ENCODE measurements at regions of chr18 and their contacts with region 1.

Region 1: DNA sequence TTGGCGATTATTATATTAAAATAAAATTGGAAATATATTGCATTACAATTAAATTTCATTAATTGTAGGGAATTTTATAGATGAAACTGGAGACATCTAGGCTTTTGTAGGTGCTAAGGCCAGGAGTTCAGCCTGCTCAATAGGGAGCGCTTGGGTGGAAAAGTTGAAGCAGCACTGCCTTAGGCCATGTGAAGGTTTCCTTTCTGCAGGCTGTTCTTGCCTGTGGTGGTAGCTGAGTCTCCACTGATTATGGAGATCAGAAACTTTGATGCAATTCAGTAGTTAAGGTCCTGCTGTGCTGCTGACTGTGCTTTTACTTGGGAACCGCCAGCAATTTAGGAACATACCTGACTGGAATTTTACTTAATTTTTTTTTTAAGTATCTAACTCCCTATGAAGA is 179.9 kb upstream of the BOD1L2 start:
- DNase-seq: no peak

Region 2: DNA sequence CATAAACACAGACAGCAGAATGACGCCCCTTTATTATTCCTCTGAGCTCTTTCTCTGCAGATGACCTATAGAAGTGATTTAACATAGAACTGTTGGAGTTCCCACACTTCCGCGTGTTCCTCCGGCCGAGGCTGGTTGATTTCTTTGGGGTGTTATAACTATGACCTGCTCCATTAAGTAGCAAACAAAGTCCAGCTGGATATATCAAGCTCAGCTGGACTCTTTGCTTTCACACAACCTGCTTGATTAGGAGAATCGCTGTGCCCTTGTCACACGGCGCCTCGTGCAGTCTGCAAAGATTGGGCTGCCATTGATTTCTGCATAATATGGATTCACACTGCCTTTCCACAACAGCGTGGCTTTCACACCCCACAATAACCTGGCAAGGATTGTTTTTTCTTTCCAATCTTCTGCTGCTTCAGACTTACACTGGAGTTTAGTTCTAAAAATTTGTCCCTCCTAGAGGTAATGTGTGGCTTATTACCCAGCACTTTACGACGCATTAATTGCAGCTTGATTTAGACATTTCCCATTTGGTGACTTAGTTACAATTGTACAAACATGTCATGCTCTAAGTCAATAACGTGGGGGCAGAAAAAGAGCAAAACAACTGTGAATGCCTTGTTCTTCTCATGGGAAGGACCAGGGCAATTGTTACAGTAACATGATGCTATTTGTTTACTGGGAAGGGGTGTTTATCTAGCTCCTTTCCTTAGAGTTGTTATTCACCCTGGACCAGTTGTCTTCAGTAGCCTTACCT is 814.3 kb before region 1 on chr18:
- intact Hi-C with region 1: loop called in 1 of 2 experiments (anchors 5 kb)
- DNase-seq: no peak

Region 3: GRCh38 chr18:57051657-57052044 is 84.6 kb after region 1 on chr18:
- intact Hi-C with region 1: no loop called
- DNase-seq: no peak